Panc1 (cell line): ENCODE measurements at regions of chr3 and their contacts with region 1.

Region 1: DNA sequence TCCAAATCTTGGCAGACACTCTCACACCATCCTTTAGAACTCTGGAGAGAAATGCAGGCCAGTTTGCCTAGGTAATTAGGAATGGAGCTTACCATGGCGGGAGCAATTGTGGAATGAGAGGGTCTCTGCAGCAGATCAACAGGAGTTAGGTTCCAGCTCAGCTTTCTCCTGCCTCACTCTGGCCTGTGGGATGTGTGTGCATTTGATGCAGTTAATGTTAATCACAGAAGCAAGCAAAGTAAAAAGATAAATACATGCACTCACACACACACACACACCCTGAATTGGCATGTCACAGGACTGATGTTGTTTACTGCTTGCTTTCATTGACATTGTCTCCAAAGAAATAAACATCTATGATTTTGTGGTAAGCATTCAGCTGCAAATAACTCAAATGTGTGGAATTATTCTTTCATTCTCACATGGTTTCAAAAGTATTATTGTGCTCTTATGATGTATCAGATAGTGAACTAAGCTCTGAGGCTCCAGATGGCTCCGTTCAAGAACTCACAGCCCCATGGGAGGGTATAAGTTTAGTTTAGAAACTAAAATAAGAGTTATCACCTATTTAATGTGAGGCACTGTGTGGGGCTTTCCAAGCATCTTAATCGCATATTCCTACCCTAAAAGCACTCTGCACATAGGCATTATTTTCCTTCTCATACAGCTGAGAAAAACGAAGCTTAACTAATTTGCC is 31.3 kb upstream of the BFSP2 start:
- DNase-seq: no peak
- ATAC-seq: no peak
- H3K4me3 ChIP-seq: no peak overlapping the region
- H3K27ac ChIP-seq: no peak overlapping the region
- H3K4me1 ChIP-seq: no peaks in the 10 kb centered on the region
- H3K27me3 ChIP-seq: no peaks in the 10 kb centered on the region; the same call in none of the 2 replicates
- CTCF ChIP-seq: no peak

Region 2: DNA sequence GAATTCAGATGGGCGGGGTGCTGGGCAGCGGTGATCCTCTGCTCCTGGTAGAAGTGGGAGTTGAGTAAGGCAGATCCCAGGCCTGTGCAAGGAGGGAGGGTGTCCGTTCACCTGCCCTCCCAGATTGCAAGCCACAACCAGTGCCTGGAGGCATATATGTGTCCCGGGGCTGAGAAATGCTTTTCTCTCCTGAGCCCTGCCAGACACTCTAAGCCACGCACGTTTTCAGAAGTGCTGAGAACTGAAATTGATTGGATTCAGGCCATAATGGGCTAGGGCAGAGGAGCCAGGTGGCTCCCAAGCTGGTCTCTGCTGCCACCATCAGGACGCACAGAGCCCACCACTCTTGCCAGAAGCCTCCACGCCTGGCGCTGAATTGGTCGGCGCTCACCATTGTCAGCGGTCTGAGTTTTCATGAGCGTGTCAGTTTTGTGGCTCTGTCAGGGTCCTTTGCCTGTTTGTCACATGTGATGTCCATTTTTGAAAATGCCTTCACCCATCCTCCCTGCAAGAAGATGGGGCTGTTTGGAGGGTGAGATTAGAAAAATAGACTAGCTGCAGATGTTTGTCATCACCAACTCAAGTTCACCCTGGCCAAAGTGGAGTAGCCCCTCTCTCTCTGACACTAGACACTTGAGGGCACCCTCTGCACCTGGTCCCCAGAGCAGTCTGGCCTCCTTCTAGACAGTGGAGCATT is 16.0 kb after region 1 on chr3:
- CTCF ChIA-PET with region 1: no interaction called
- POLR2A ChIA-PET with region 1: interaction called, 11 read pairs
- in situ Hi-C with region 1: no loop called
- intact Hi-C with region 1: no loop called
- DNase-seq: peak; percentile 25
- ATAC-seq: peak; percentile 76
- H3K4me3 ChIP-seq: no peak overlapping the region
- H3K27ac ChIP-seq: peak overlapping the region; percentile 58; the same call in 1 of the 2 replicates
- H3K4me1 ChIP-seq: 0 out of 2 replicates have a peak, but pooled peaks cover 7% of the 10 kb centered on the region
- H3K27me3 ChIP-seq: no peaks in the 10 kb centered on the region
- CTCF ChIP-seq: peak; percentile 84

Region 3: GRCh38 chr3:133408961-133409360 is 40.4 kb after region 1 on chr3:
- CTCF ChIA-PET with region 1: no interaction called
- POLR2A ChIA-PET with region 1: no interaction called
- in situ Hi-C with region 1: no loop called
- intact Hi-C with region 1: loop called (anchors 2 kb)
- DNase-seq: no peak
- ATAC-seq: no peak
- H3K4me3 ChIP-seq: no peak overlapping the region
- H3K27ac ChIP-seq: peak overlapping the region; percentile 98
- H3K4me1 ChIP-seq: peaks cover 57% of the 10 kb centered on the region
- H3K27me3 ChIP-seq: no peaks in the 10 kb centered on the region
- CTCF ChIP-seq: no peak

Region 4: DNA sequence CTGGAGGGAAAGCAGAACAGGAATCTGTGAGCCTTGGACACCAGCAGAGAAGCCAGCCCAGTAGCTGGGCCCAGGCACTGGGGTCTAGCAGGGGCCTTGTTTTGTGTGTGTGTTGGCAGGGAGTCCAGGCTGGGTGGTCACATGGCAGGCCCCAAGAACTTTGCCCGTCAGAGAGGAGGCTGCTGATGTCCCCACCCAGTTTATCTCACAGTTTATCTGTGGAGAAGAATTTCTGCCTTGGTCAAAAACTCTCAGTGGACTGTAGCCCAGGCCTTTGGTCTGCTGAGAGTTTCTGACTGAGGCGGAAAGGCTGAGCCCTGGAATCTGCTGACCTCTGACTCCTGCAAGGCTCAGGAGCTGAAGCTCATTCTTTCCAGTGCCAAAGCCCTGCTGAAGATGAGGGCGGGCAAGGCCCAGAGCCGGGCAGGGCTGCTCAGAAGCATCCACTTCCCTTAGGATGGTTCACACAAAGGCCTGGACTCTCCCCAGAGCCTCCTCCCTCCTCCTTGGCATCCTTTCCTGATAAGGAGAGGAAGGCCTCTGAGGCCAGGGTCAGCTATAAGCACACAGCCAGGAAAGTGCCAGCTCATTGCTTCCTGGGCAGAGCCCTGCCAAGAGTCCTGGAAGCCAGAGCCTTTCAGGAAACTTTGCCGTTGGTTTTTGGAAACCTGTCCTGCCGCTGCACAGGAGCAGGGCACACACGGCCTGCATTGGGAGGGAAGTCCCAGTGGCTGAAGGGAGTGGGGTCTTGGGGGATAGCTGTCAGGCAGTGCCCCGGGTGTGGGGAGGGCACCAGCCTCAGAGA is 698.3 kb after region 1 on chr3:
- CTCF ChIA-PET with region 1: no interaction called
- POLR2A ChIA-PET with region 1: no interaction called
- in situ Hi-C with region 1: no loop called
- intact Hi-C with region 1: no loop called
- DNase-seq: no peak
- ATAC-seq: 0 out of 2 replicates have a peak, but pooled peaks have one; percentile 7
- H3K4me3 ChIP-seq: no peak overlapping the region
- H3K27ac ChIP-seq: no peak overlapping the region
- H3K4me1 ChIP-seq: no peaks in the 10 kb centered on the region
- H3K27me3 ChIP-seq: peaks cover 2% of the 10 kb centered on the region; the same call in 1 of the 2 replicates
- CTCF ChIP-seq: no peak